Activated CD8-positive, alpha-beta T cell treated with anti-CD3 and anti-CD28 coated beads, Interleukin-2, amount 10 ng/mL, durations not matched to agents 7 days and 5 days (primary cell): ENCODE measurements at regions of chr2 and their contacts with region 1.

Region 1: GRCh38 chr2:98412751-98413458 is 31.8 kb upstream of the INPP4A start:
- DNase-seq: peak; percentile 78
- ATAC-seq: peak; percentile 94
- H3K4me3 Mint-ChIP-seq: no peak overlapping the region
- H3K27ac Mint-ChIP-seq: no peak overlapping the region
- H3K4me1 Mint-ChIP-seq: peaks cover 9% of the 10 kb centered on the region
- H3K27me3 Mint-ChIP-seq: peaks cover 4% of the 10 kb centered on the region

Region 2: GRCh38 chr2:98269274-98269673 is 143.6 kb before region 1 on chr2:
- CTCF ChIA-PET with region 1: no interaction called
- POLR2A ChIA-PET with region 1: no interaction called
- DNase-seq: peak; percentile 30
- ATAC-seq: no peak
- H3K4me3 Mint-ChIP-seq: no peak overlapping the region
- H3K27ac Mint-ChIP-seq: no peak overlapping the region
- H3K4me1 Mint-ChIP-seq: no peaks in the 10 kb centered on the region
- H3K27me3 Mint-ChIP-seq: peaks cover 5% of the 10 kb centered on the region

Region 3: GRCh38 chr2:98426771-98427170 is 13.9 kb after region 1 on chr2:
- CTCF ChIA-PET with region 1: interaction called, 15 read pairs
- POLR2A ChIA-PET with region 1: no interaction called
- DNase-seq: no peak
- ATAC-seq: no peak
- H3K4me3 Mint-ChIP-seq: no peak overlapping the region
- H3K27ac Mint-ChIP-seq: no peak overlapping the region
- H3K4me1 Mint-ChIP-seq: no peaks in the 10 kb centered on the region
- H3K27me3 Mint-ChIP-seq: no peaks in the 10 kb centered on the region

Region 4: GRCh38 chr2:98465456-98466226 is 52.7 kb after region 1 on chr2:
- CTCF ChIA-PET with region 1: interaction called, 19 read pairs
- POLR2A ChIA-PET with region 1: interaction called, 3 read pairs
- DNase-seq: peak; percentile 86
- ATAC-seq: peak; percentile 57
- H3K4me3 Mint-ChIP-seq: peak overlapping the region; percentile 73
- H3K27ac Mint-ChIP-seq: peak overlapping the region; percentile 94
- H3K4me1 Mint-ChIP-seq: peaks cover 89% of the 10 kb centered on the region
- H3K27me3 Mint-ChIP-seq: no peaks in the 10 kb centered on the region

Region 5: DNA sequence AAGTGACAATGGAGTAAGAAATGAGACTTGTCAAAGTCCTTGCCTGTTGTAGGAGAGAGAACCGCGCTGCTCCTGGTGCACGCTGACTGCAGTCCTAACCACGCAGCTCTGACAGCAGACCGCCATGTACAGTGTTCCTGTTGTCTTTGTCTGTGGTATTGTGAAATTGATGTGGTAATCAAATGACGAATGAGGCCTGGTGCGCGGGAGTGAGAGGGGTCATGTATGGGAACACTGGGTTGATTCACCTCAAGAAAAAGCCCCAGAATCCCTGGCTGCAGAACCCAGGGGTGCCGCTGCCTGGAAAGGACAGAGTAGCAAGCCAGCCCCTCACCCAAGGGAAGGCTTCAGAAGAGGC is 95.8 kb after region 1 on chr2:
- CTCF ChIA-PET with region 1: interaction called, 15 read pairs
- POLR2A ChIA-PET with region 1: no interaction called
- DNase-seq: peak; percentile 62
- ATAC-seq: peak; percentile 80
- H3K4me3 Mint-ChIP-seq: peak overlapping the region; percentile 0
- H3K27ac Mint-ChIP-seq: peak overlapping the region; percentile 81
- H3K4me1 Mint-ChIP-seq: peaks cover 96% of the 10 kb centered on the region
- H3K27me3 Mint-ChIP-seq: no peaks in the 10 kb centered on the region

Region 6: DNA sequence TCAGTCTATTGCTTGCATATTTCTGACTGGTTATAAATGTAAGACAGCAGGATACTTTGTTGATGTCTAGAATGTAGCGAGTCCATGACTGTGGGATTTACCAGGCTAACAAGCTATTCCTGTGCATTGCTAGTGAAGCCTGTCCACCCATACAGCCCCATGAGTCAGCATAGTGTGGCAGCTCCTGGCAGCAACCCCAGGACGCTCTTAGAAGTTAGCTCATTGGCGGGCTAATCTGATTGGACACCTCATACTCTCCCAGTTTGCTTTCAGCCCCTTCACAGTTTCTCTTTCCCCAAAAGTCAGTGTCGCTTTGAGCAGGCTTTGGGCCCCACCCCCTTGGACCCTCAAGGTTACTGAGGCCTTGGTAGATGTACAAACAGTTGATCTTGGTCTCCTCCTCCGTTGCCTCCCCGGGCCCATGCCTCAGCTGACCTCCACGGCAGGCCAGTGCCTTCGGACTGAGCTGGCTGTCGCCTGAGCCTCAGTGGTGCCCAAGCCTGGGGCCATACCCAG is 147.4 kb after region 1 on chr2:
- CTCF ChIA-PET with region 1: interaction called, 10 read pairs
- POLR2A ChIA-PET with region 1: interaction called, 3 read pairs
- DNase-seq: no peak
- ATAC-seq: no peak
- H3K4me3 Mint-ChIP-seq: peak overlapping the region; percentile 35
- H3K27ac Mint-ChIP-seq: peak overlapping the region; percentile 71
- H3K4me1 Mint-ChIP-seq: peaks cover 78% of the 10 kb centered on the region
- H3K27me3 Mint-ChIP-seq: no peaks in the 10 kb centered on the region

Region 7: GRCh38 chr2:98601532-98602132 is 188.7 kb after region 1 on chr2:
- CTCF ChIA-PET with region 1: interaction called, 13 read pairs
- POLR2A ChIA-PET with region 1: no interaction called
- DNase-seq: peak; percentile 47
- ATAC-seq: peak; percentile 77
- H3K4me3 Mint-ChIP-seq: no peak overlapping the region
- H3K27ac Mint-ChIP-seq: no peak overlapping the region
- H3K4me1 Mint-ChIP-seq: peaks cover 34% of the 10 kb centered on the region
- H3K27me3 Mint-ChIP-seq: no peaks in the 10 kb centered on the region